Left cardiac atrium (tissue), 4 donors: ENCODE measurements at regions of chr4 and their contacts with region 1.

Region 1: GRCh38 chr4:186015212-186015785 is 53.7 kb upstream of the TLR3 start:
- DNase-seq: peak; percentile 39
- ATAC-seq: peak; percentile 69 to 86

Region 2: GRCh38 chr4:185796176-185796575 is 219.1 kb before region 1 on chr4:
- intact Hi-C with region 1: loop called in 1 of 2 experiments (anchors 5 kb)
- DNase-seq: no peak
- ATAC-seq: peak; percentile 28 to 40

Region 3: GRCh38 chr4:185847352-185848107 is 167.8 kb before region 1 on chr4:
- intact Hi-C with region 1: loop called (anchors 5 to 10 kb)
- DNase-seq: peak; percentile 73
- ATAC-seq: peak; percentile 83 to 85

Region 4: GRCh38 chr4:185865901-185866328 is 149.4 kb before region 1 on chr4:
- intact Hi-C with region 1: loop called in 1 of 2 experiments (anchors 5 kb)
- DNase-seq: no peak
- ATAC-seq: peak; percentile 44 to 51

Region 5: GRCh38 chr4:186118582-186118981 is 103.3 kb after region 1 on chr4:
- intact Hi-C with region 1: no loop called
- DNase-seq: no peak
- ATAC-seq: no peak

Region 6: GRCh38 chr4:186266729-186267456 is 251.6 kb after region 1 on chr4:
- intact Hi-C with region 1: no loop called
- DNase-seq: no peak
- ATAC-seq: no peak